ENCODE measurements at regions of chr2 and their contacts with region 1.

Region 1: DNA sequence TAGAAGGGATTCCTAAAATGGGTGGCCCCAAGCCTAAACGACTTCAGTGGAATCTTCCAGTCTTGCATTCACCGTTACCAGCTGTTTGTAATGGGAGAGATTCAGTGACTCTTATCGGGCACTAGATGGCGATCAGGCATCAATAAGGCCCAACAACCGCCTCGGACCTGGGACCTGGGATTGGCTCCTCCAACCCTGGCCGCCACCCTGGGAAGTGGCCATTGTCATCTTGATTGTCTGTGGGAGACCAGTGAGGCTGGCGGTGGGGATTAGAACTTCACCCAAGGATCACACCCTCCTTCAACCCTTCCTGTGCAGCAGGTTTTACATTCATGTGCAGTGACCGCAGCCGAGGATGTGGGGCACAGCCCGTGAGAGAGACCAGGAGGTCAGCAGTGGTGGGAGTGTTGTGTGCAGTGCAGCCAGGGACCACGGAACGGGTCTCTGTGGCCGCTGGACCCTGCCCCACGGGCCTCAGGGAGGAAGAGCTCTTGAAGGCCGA is 85.3 kb downstream of the SPP2 start:
- DNase-seq: peak; percentile 84
- H3K4me3 Mint-ChIP-seq: no peak overlapping the region
- H3K27ac Mint-ChIP-seq: no peak overlapping the region
- H3K4me1 Mint-ChIP-seq: peaks cover 36% of the 10 kb centered on the region
- H3K27me3 Mint-ChIP-seq: no peaks in the 10 kb centered on the region
- CTCF ChIP-seq: peak; percentile 92

Region 2: DNA sequence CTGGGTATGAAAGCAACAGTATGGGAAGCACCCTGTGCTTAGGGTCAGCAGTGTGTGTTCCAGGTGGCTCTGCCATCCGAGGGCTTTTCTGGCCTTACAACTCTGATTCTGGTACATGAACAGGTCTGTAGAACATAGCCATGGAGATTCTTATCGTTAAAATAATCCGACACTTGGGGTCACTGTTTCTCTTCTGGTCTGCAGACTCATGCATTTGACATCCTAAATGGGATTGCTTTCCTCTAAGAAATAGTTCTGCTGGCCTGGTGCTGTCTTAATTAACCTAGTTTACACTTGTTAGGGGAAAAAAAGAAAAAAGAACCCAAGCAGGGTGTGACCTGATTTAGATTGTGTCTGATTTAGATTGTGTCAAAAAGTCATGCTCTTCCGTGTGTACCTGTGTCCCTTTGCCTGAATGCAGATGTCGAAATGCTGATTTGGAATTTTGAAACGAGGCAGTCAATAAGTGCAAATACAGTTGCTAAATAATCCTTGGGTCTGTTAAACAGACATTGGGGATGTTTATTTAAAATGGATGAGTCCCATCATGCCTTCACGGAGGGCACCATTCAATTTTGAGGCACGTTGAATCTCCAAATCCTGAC is 159.0 kb before region 1 on chr2:
- CTCF ChIA-PET with region 1: interaction called, 5 read pairs
- POLR2A ChIA-PET with region 1: interaction called, 4 read pairs
- intact Hi-C with region 1: loop called (anchors 1 kb)
- DNase-seq: peak; percentile 75
- H3K4me3 Mint-ChIP-seq: no peak overlapping the region
- H3K27ac Mint-ChIP-seq: no peak overlapping the region
- H3K4me1 Mint-ChIP-seq: peaks cover 29% of the 10 kb centered on the region
- H3K27me3 Mint-ChIP-seq: no peaks in the 10 kb centered on the region
- CTCF ChIP-seq: peak; percentile 68

Region 3: DNA sequence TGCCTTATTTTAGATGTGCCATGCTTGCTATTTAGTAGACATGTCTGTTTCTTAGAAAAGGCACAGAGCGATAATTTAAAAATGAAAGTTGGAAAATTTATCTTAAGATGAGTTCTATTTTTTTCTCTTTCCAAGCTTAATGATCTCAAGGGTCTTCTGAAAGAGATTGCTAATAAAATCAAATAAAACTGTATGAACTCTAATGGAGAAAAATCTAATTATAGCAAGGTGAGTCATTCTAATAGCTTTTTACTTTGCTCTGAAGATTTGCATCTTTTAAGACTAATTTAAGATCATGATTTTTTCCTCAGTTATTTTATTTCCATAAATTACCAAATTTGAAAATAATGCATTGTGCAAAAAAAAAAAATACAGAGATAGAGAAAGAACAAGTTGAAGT is 121.3 kb before region 1 on chr2:
- CTCF ChIA-PET with region 1: no interaction called
- POLR2A ChIA-PET with region 1: no interaction called
- intact Hi-C with region 1: no loop called
- DNase-seq: no peak
- H3K4me3 Mint-ChIP-seq: no peak overlapping the region
- H3K27ac Mint-ChIP-seq: no peak overlapping the region
- H3K4me1 Mint-ChIP-seq: no peaks in the 10 kb centered on the region
- H3K27me3 Mint-ChIP-seq: peaks cover 12% of the 10 kb centered on the region
- CTCF ChIP-seq: no peak

Region 4: DNA sequence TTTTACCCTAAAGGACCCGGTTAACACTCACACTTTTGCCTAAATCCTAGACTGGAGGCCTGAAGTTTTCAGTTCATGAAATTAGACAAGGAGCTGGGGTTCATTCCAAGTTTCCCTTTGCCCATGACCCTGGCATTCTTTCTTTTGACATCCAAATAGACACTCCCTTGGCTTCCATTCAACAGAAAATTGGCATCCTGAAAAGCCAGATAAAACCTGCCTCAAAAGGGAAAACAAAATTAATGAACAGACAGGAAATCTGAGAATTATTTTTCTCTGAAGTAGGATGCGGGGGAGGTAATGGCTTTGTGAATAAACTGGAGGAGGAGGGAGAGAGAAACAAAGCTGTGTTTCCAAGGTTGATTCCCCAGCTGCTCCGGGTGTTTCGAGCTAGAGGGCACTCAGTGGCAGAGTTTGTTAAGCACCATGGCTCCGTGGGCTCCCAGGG is 44.3 kb before region 1 on chr2:
- CTCF ChIA-PET with region 1: interaction called, 3 read pairs
- POLR2A ChIA-PET with region 1: interaction called, 11 read pairs
- intact Hi-C with region 1: no loop called
- DNase-seq: peak; percentile 82
- H3K4me3 Mint-ChIP-seq: peak overlapping the region; percentile 43
- H3K27ac Mint-ChIP-seq: peak overlapping the region; percentile 69
- H3K4me1 Mint-ChIP-seq: peaks cover 15% of the 10 kb centered on the region
- H3K27me3 Mint-ChIP-seq: no peaks in the 10 kb centered on the region
- CTCF ChIP-seq: no peak

Region 5: DNA sequence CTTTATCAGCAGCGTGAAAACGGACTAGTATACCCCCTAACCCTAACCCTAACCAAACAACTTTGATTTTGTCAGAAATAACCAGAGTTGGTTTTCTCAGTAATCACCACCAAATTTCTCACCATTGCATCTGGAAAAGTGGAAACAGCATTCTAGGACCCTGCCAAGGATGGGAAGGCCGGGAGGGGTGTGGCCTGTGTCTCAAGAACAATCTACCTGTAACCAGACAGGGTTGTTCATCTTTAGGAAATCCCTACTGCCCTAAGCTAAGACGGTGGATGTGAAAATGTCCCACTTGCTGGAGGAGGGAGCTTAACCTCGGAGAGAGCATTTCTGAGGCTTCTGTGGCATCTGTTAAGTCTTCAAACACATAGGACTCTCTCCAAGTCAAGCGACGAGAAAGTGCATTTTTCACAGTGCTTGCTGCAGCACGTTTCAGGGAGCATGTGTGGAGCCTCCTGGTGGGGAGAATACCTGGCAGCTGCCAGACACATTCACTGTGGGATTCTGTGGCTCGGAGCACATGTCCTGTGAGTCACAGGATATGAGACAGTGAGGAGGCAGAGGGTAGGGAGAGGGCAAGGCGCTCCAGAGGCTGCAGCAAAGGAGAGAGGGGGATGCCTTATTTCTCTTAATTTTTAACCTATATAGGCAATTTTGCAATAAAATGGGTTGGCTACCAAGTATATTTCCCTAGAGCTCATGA is 122.2 kb after region 1 on chr2:
- CTCF ChIA-PET with region 1: interaction called, 7 read pairs
- POLR2A ChIA-PET with region 1: interaction called, 4 read pairs
- intact Hi-C with region 1: loop called (anchors 1 kb)
- DNase-seq: peak; percentile 97
- H3K4me3 Mint-ChIP-seq: no peak overlapping the region
- H3K27ac Mint-ChIP-seq: peak overlapping the region; percentile 50
- H3K4me1 Mint-ChIP-seq: peaks cover 29% of the 10 kb centered on the region
- H3K27me3 Mint-ChIP-seq: no peaks in the 10 kb centered on the region
- CTCF ChIP-seq: peak; percentile 68

Region 6: GRCh38 chr2:234544659-234545611 is 409.2 kb after region 1 on chr2:
- CTCF ChIA-PET with region 1: interaction called, 21 read pairs
- POLR2A ChIA-PET with region 1: interaction called, 4 read pairs
- intact Hi-C with region 1: loop called (anchors 1 kb)
- DNase-seq: peak; percentile 68
- H3K4me3 Mint-ChIP-seq: no peak overlapping the region
- H3K27ac Mint-ChIP-seq: no peak overlapping the region
- H3K4me1 Mint-ChIP-seq: no peaks in the 10 kb centered on the region
- H3K27me3 Mint-ChIP-seq: no peaks in the 10 kb centered on the region
- CTCF ChIP-seq: peak; percentile 87

Region 7: GRCh38 chr2:235149240-235149659 is 1013.5 kb after region 1 on chr2:
- CTCF ChIA-PET with region 1: no interaction called
- POLR2A ChIA-PET with region 1: no interaction called
- intact Hi-C with region 1: no loop called
- DNase-seq: no peak
- H3K4me3 Mint-ChIP-seq: no peak overlapping the region
- H3K27ac Mint-ChIP-seq: no peak overlapping the region
- H3K4me1 Mint-ChIP-seq: no peaks in the 10 kb centered on the region
- H3K27me3 Mint-ChIP-seq: peaks cover 89% of the 10 kb centered on the region
- CTCF ChIP-seq: no peak